ENCODE measurements at regions of chr13 and their contacts with region 1.

Region 1: DNA sequence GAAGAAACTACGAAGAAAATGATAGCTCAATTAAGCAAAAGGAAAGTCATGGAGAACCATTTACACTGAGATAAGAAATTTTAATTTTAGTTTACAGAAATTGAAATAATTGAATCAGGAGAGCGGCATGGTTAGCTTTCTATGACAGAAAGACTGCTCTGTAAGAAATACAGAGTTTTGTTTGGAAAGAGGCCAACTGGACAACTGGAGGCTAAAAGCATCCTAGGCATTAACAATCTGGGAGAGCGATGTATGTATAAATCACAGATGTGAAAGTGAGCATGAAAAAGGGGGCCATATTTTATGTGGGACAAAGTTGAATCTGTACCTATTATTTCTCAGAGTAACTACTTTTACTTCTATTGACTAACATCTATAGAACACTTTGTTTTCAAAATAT is 1608.8 kb upstream of the PCDH20 start:
- DNase-seq: no peak
- ATAC-seq: no peak
- H3K4me3 ChIP-seq: no peak overlapping the region
- H3K27ac ChIP-seq: no peak overlapping the region
- H3K4me1 ChIP-seq: no peaks in the 10 kb centered on the region
- H3K27me3 ChIP-seq: no peaks in the 10 kb centered on the region
- CTCF ChIP-seq: no peak

Region 2: GRCh38 chr13:61045251-61045650 is 1979.2 kb before region 1 on chr13:
- intact Hi-C with region 1: loop called in 1 of 2 experiments (anchors 5 kb)
- DNase-seq: no peak
- ATAC-seq: no peak
- H3K4me3 ChIP-seq: no peak overlapping the region
- H3K27ac ChIP-seq: no peak overlapping the region
- H3K4me1 ChIP-seq: no peaks in the 10 kb centered on the region
- H3K27me3 ChIP-seq: no peaks in the 10 kb centered on the region
- CTCF ChIP-seq: no peak

Region 3: DNA sequence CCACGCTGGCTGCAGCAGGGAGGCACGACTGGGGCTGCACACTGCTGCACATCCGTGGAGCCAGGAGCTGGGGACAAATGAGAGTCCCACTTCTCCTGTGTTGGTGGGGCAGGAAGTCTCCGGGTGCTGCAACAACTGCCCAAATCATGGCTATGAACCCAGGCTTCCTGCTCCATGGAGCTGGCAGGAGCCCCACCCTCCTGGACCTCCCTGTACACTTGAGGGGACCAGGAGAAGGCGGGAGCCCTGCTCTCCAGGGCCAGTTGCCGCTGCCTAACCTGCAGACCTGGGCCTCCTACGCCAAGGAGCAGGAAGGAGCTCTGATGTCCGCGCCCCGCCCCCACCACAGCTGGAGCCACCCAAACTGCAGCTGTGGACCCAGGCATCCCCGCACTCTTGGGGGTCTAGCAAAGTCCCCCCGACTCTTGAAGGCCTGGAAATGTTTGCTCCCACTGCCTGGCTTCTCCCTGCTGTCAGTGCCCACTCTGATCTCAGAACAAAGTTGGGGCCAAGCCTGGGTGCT is 856.7 kb before region 1 on chr13:
- intact Hi-C with region 1: no loop called
- DNase-seq: no peak
- ATAC-seq: no peak
- H3K4me3 ChIP-seq: no peak overlapping the region
- H3K27ac ChIP-seq: no peak overlapping the region
- H3K4me1 ChIP-seq: no peaks in the 10 kb centered on the region
- H3K27me3 ChIP-seq: no peaks in the 10 kb centered on the region
- CTCF ChIP-seq: no peak

Region 4: DNA sequence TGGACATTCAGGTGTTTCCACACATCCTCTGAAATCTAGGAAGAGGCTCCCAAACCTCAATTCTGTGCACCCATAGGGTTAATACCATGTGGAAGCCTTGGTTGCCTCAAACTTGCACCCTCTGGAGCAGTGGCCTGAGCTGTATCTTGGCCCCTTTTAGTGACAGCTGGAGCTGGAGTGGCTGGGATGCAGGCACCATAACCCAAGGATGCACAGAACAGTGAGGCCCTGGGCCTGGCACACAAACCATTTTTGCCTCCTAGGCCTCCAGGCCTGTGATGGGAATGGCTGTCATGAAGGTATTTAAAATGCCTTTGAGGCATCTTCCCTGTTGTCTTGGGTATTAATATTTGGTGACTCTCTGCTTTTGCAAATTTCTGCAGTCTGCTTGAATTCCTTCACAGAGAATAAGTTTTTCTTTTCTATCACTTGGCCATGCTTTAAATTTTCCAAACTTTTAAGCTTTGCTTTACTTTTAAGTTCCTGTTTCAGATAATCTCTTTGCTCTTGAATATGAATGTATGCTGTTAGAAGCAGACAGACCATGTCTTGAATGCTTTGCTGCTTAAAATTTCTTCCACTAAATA is 14.3 kb before region 1 on chr13:
- intact Hi-C with region 1: no loop called
- DNase-seq: no peak
- ATAC-seq: no peak
- H3K4me3 ChIP-seq: no peak overlapping the region
- H3K27ac ChIP-seq: no peak overlapping the region
- H3K4me1 ChIP-seq: no peaks in the 10 kb centered on the region
- H3K27me3 ChIP-seq: no peaks in the 10 kb centered on the region
- CTCF ChIP-seq: no peak

Region 5: GRCh38 chr13:63044589-63045313 is 20.3 kb after region 1 on chr13:
- intact Hi-C with region 1: no loop called
- DNase-seq: no peak
- ATAC-seq: no peak
- H3K4me3 ChIP-seq: no peak overlapping the region
- H3K27ac ChIP-seq: no peak overlapping the region
- H3K4me1 ChIP-seq: no peaks in the 10 kb centered on the region
- H3K27me3 ChIP-seq: no peaks in the 10 kb centered on the region
- CTCF ChIP-seq: no peak

Region 6: GRCh38 chr13:63124863-63125262 is 100.4 kb after region 1 on chr13:
- intact Hi-C with region 1: no loop called
- DNase-seq: no peak
- ATAC-seq: no peak
- H3K4me3 ChIP-seq: no peak overlapping the region
- H3K27ac ChIP-seq: no peak overlapping the region
- H3K4me1 ChIP-seq: no peaks in the 10 kb centered on the region
- H3K27me3 ChIP-seq: no peaks in the 10 kb centered on the region
- CTCF ChIP-seq: peak; percentile 12

Measured in psoas muscle (tissue), 8 donors.